ENCODE measurements at regions of chr3 and their contacts with region 1.

Region 1: DNA sequence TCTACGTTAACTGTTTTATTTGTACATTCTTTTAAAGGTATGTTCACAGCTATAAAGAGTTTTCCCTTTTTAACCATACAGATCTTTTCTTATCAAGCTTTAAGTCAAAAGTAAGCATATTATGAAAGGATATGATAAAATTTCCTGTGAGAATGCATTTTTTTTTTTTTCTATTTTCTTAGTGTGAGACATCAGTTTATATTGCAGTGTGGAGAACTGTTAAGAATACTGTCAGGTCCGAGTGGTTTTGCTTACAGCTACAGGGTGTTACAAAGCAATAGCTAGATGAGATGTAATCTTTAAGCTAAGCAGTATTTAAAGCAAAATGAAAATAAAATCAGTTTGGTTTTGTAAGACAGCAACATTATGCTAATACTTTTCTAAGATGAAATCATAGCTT is 133.2 kb downstream of the SLC25A26 start:
- DNase-seq: no peak
- ATAC-seq: no peak
- H3K4me3 ChIP-seq: no peak overlapping the region
- H3K27ac ChIP-seq: no peak overlapping the region
- H3K4me1 ChIP-seq: no peaks in the 10 kb centered on the region
- H3K27me3 ChIP-seq: no peaks in the 10 kb centered on the region
- CTCF ChIP-seq: no peak

Region 2: GRCh38 chr3:65848024-65848423 is 506.0 kb before region 1 on chr3:
- CTCF ChIA-PET with region 1: no interaction called
- POLR2A ChIA-PET with region 1: no interaction called
- in situ Hi-C with region 1: no loop called
- intact Hi-C with region 1: no loop called
- DNase-seq: no peak
- ATAC-seq: no peak
- H3K4me3 ChIP-seq: no peak overlapping the region
- H3K27ac ChIP-seq: no peak overlapping the region
- H3K4me1 ChIP-seq: no peaks in the 10 kb centered on the region
- H3K27me3 ChIP-seq: no peaks in the 10 kb centered on the region
- CTCF ChIP-seq: no peak

Region 3: DNA sequence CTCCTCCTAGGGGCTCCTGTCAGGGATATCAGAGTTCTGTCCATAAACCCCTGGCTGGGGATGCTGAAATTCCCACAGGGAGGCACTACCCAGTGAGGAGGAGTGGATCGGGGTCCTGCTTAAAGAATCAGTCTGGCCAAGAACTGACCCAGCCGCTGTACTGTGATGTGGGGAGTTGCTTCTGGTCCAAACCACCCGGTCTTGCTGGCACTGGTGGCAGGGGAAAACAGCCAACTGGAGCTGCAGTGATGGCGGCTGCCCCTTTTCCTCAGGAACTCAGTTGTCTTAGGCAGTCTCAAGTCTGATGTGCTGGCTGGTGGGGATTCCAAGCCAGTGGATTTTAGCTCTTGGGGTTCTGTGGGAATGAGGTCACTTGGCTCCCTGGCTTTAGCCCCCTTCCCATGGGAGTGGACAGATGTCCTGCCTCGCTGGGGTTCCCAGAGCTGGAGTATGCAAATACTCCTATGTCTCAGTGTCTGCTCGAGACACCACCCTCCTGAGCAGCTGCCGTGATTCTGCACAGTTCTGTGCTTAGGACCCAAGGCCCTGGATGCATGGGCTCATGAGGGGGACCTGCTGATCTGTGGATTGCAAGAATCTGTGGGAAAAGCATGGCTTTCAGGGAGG is 36.1 kb before region 1 on chr3:
- CTCF ChIA-PET with region 1: interaction called, 12 read pairs
- POLR2A ChIA-PET with region 1: no interaction called
- in situ Hi-C with region 1: no loop called
- intact Hi-C with region 1: no loop called
- DNase-seq: no peak
- ATAC-seq: no peak
- H3K4me3 ChIP-seq: no peak overlapping the region
- H3K27ac ChIP-seq: no peak overlapping the region
- H3K4me1 ChIP-seq: no peaks in the 10 kb centered on the region
- H3K27me3 ChIP-seq: no peaks in the 10 kb centered on the region
- CTCF ChIP-seq: no peak

Region 4: DNA sequence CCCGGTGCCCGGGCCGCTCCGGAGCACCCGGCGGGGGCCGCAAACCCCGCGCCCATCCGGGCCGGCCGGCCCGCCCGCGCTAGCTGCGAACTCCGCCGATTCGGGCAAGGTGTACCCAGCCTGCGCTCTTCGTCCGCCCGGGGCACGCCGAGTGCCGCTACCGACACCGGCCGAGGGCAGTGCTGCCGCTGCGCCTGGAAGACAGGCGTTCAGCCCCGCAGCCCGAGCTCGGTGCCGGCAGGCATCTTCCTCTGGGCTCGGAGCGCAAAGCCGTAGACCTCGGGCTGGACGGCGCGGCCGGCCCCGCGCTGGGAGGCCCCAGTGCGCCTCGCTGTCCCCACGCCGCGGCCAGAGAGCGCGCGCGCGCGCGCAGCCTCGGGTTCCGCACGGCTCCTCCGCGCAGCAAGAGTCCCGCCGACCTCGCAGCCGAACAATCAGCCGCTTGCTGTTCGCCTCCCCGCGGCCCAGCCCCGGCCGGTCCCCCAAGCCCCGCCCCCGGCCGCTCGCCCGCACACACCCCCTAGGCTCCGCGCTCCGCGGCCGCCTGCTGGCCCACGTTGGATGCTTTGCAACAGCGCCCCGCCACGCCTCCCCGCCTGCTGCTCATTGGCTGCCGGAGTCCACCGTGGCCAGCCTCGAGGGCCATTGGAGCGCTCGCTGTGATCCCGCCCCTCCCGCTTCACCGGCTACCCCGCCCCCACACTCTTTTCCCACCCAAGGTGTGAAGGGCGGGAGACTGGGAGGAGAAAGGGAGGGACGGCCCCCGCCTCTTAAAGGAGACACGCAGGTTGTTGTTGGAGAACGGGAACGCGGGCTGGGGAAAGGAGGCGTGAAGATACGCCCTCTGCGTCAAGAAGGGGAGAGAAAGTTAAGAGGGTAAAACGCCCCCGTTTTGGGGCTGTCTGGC is 146.8 kb after region 1 on chr3 and contains the start of gene LRIG1:
- CTCF ChIA-PET with region 1: no interaction called
- POLR2A ChIA-PET with region 1: no interaction called
- in situ Hi-C with region 1: no loop called
- intact Hi-C with region 1: no loop called
- DNase-seq: peak; percentile 30
- ATAC-seq: peak; percentile 99
- H3K4me3 ChIP-seq: peak within 1 kb of the TSS; percentile 54 to 60
- H3K27ac ChIP-seq: no peak within 1 kb of the TSS
- H3K4me1 ChIP-seq: peaks cover 3% of the 10 kb centered on the region; the same call in 1 of the 2 replicates
- H3K27me3 ChIP-seq: peaks cover 8% of the 10 kb centered on the region
- CTCF ChIP-seq: 0 out of 2 replicates have a peak, but pooled peaks have one; percentile 12
- total RNA-seq, gene LRIG1: 5.3 TPM